ENCODE measurements at regions of chr9 and their contacts with region 1.

Region 1: GRCh38 chr9:71058660-71059059 is 62.8 kb downstream of the TRPM3 start:
- DNase-seq: no peak
- ATAC-seq: no peak

Region 2: DNA sequence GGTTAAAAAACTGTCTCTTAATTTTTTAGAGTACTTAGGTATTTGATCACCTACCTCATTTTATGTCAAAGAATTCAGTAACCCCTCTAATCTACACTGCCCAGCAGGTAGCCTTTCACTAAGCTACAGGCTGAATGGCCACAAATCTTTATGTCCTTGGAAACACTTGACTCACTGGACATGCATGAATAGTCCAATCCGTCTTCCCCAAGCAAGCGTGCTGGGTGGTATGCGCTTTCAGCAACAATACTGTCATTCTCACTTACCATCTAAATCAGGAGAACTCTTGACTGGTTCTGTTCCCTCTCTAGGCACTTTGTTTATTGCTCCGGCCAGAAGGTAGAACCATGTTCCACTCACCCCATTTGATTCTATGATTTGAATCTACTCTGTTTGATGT is 10.4 kb before region 1 on chr9:
- intact Hi-C with region 1: loop called (anchors 1 kb)
- DNase-seq: no peak
- ATAC-seq: no peak

Region 3: DNA sequence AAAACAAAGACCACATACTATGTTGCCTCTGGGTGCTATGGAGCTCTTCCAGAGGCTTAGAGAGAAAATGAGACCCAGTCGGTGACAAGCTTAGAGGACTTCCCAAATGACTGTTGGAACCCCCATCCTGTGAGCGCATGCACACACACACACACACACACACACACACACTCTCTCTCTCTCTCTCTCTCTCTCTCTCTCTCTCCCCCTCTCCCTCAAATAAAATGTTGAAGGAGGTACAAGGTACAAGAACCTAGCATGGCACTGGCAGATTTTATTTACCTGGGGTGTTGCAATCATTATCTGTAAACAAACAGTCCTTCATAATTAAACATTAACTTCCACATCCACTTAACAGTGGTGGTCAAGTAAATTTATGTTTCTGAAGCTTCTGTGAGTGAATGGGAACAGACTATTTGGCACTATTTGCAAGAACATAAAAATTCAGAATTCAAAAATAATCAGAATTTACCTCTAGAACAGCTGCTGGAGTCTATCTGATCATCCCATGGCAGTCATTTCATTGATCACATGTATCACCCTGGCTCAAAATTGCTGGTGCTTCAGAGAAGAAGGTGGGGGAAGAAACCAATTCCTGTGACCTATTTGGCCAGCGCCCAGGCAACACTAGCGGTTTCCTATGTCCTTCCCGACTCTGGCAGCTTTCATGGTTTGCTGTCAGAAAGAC is 37.9 kb after region 1 on chr9:
- intact Hi-C with region 1: loop called (anchors 5 kb)
- DNase-seq: no peak
- ATAC-seq: no peak

Region 4: GRCh38 chr9:71562140-71562539 is 503.5 kb after region 1 on chr9:
- intact Hi-C with region 1: no loop called
- DNase-seq: no peak
- ATAC-seq: no peak

Measured in Right ventricle myocardium superior (tissue), 1 donor.